OCI-LY7 (cell line): ENCODE measurements at regions of chr22 and their contacts with region 1.

Region 1: DNA sequence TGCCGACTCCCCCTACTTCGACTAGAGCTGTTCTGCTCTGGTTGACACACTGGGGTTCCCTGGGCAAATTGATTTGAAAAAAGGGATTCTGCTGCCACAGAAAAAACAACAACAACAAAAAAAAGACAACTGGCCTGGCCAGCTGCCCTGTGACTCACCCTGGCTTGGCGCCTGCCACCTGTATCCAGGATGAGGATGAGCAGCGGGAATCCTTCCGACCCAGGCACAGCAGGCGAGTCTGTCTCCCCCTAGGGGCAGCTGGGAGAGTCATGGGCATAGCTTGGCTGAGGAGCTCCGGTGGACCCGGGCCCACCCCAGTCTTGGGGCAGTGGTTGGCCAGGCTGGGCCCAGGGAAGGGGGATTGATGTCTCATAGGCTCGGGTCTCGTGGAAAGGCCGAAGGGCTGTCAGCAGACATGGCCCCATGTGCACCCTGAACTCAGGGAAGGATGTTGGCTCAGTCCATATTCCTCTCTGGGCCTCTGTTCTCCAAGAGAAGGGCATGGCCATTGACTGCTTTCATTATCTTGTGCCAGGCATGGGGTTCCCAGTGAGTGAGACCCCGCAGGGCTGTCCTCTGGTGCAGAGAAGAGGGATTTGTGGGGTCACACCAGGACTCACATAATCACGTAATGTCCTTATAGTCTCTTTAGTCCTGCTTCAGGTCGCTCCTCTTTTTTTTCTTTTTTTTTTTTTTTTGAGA is 10.4 kb upstream of the SUN2 start:
- DNase-seq: peak; percentile 26
- H3K4me3 ChIP-seq: no peak overlapping the region
- H3K27ac ChIP-seq: no peak overlapping the region
- H3K4me1 ChIP-seq: no peaks in the 10 kb centered on the region
- CTCF ChIP-seq: peak; percentile 82

Region 2: DNA sequence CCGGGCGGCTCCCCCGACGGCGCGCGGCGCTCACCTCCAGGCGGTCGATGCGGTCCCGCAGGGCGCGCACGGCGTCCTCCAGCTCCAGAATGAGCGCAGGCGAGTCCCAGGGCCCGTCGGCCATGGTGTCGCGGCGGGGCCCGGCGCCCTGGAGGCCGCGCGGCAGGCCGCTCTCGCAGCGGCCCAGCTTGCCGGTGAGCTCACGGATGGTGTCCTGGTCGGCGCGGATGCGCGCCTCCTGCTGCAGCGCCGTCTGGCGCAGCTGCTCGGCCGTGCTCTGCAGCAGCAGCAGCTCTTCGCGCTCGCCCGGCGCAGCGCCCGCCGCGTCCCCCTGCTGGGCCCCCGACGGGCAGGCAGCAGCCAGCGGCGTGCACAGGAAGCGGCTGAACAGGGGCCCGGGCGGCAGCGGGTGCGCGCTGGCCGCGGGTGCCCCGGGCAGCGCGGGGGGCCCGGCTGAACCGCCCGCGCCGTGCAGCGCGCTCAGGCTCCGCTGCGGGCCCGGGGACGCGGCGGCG is 77.0 kb after region 1 on chr22:
- CTCF ChIA-PET with region 1: no interaction called
- POLR2A ChIA-PET with region 1: no interaction called
- intact Hi-C with region 1: no loop called
- DNase-seq: no peak
- H3K4me3 ChIP-seq: no peak overlapping the region
- H3K27ac ChIP-seq: no peak overlapping the region
- H3K4me1 ChIP-seq: no peaks in the 10 kb centered on the region
- CTCF ChIP-seq: no peak

Region 3: DNA sequence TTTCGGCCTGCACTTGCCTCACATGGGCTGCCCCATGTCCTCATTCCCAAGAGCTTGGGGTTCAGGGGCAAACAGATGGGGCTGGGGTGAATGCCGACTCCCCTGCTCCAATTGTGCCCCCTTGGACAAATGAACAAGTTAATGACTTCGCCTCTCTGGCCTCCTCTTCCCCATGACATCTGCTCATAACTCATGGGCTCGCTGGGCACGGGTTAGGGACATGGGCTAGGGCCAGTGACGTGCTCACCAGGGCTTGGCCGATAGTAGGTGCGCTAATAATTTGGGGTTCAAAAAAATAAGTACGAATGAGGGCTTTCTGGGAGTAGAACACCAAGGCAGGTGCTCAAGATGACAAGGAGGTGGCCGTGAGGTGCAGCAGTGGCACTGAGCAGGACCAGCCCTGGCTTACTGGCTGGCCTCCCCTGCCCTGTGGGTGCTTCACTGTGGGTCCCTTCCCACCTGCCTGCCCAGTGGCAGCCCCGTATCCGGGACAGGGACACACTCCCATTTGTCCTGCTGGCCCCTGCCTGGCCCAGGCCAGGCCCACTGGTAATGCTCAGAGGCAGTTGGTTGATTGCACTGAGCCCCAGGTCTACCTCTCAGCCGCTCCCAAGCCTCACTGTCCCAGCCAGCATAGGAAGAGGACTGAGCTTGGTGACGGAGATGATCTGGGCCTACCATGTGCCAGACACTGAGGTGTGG is 93.5 kb after region 1 on chr22:
- CTCF ChIA-PET with region 1: no interaction called
- POLR2A ChIA-PET with region 1: no interaction called
- intact Hi-C with region 1: loop called (anchors 5 kb)
- DNase-seq: no peak
- H3K4me3 ChIP-seq: no peak overlapping the region
- H3K27ac ChIP-seq: no peak overlapping the region
- H3K4me1 ChIP-seq: no peaks in the 10 kb centered on the region
- CTCF ChIP-seq: no peak

Region 4: DNA sequence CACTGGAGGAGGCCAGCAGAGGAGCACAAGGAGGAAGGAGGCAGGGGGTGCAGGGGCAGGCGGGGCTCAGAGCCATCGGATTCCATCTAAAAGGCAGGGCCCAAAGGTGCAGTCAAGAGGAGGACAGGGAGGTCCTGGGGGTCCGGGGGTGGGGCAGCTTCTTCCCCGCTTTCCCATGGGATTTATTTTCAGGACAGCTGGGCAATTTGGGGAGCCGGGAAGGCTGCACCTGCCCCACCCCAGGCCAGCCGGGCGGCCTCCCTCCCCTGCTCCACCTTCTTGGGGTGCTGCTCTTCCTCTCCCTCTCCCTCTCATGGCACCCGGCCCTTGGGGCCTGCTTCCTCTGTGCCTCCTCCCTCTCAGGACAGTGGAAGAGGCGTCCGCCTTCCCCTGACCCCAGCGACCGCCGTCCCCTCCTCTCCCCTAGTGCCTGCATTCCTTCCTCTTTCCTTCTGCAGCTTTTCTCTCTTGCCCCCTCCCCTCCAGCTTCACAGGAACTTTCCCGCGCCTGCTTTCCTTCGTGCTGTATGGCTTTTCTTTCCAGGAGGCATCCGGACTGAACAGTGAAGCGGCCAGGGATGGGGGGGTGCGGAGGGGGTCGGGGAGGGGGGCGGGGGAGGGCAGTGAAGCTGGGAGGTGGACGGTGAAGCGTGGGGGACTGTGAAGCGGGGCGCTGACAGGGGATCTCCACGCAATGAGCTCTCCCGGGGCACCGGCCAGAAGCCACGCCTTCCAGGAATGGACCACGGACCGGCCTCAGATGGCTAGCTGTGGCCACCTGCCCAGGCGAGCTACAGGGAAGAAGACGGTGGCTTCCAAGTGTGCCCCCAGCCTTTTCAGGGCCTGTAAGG is 357.7 kb after region 1 on chr22:
- CTCF ChIA-PET with region 1: no interaction called
- POLR2A ChIA-PET with region 1: no interaction called
- intact Hi-C with region 1: loop called (anchors 5 kb)
- DNase-seq: no peak
- H3K4me3 ChIP-seq: no peak overlapping the region
- H3K27ac ChIP-seq: no peak overlapping the region
- H3K4me1 ChIP-seq: no peaks in the 10 kb centered on the region
- CTCF ChIP-seq: no peak

Region 5: DNA sequence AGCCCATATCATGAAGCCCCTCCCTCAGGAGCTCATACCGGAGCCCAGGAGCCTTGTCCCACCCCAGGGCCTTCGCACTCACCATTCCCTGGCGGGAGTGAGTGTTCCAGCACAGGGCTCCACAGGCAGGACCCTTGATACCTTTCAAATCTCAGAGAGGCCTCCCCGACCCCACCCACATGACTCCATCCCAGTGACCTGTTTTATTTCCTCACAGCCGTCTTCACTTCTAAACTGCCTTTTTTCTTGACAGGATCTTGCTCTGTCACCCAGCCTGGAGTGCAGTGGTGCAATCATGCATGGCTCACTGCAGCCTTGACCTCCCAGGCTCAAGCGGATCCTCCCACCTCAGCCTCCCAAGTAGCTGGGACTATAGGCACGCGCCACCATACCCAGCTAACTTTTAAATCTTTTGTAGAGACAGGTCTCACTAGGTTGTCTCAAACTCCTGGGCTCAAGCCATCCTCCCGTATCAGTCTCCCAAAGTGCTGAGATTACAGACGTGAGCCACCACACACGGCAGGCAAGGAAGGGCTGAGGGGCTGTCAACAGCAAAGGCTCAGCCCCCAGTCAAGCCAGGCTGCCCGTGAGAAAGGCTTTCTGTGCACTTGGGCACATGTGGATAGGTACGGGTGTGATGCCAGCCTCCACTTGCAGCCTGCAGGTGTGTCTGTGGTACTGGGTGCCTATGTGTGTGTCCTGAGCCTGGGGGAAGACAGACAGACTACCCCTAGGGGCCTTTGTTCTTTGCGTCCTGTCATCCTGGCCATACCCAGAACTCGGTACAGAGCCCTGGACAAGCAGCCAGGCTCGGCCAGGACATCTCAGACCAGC is 543.9 kb after region 1 on chr22:
- CTCF ChIA-PET with region 1: no interaction called
- POLR2A ChIA-PET with region 1: no interaction called
- intact Hi-C with region 1: loop called (anchors 2 kb)
- DNase-seq: peak; percentile 40
- H3K4me3 ChIP-seq: no peak overlapping the region
- H3K27ac ChIP-seq: peak overlapping the region; percentile 38
- H3K4me1 ChIP-seq: peaks cover 40% of the 10 kb centered on the region
- CTCF ChIP-seq: no peak